Right lobe of liver (tissue), 6 donors: ENCODE measurements at regions of chr10 and their contacts with region 1.

Region 1: GRCh38 chr10:24642622-24643417 is 80.9 kb downstream of the ARHGAP21 start:
- DNase-seq: no peak
- ATAC-seq: peak; percentile 98 to 99 (median 98)
- H3K4me3 ChIP-seq: no peak overlapping the region
- H3K27ac ChIP-seq: no peak overlapping the region
- H3K4me1 ChIP-seq: peaks cover 0 to 15% (median 7%) of the 10 kb centered on the region in 4 donors
- H3K27me3 ChIP-seq: no peaks in the 10 kb centered on the region
- CTCF ChIP-seq: peak; percentile 70 to 93 (median 74)
- POLR2A ChIP-seq: no peak

Region 2: DNA sequence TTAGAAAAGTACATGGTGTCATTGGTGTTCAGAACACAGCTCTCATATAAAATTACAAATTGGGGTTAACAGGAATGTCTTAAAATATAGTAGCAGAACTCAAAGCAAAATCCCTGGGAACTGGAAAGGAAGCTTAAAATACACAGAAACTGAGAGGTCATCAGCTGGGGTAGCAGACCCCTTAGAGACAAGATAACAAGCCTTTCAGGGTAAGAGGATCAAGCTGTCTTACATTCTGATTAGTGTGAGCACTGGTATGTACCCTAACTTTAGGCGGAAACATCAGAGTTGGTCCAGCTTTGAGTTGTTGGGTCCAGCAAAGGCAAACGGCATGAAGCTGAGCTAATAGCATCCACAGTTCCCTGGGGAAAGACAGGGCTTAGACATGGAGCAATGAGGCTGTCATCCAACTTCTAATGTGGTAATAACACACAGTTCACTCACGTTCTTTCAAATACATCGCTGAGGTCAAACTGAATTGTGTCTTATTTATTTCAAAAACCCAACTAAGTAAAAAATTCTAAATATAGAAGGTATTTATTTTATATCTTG is 48.2 kb after region 1 on chr10:
- intact Hi-C with region 1: no loop called
- DNase-seq: no peak
- ATAC-seq: peak; percentile 11 to 49 (median 26)
- H3K4me3 ChIP-seq: no peak overlapping the region
- H3K27ac ChIP-seq: no peak overlapping the region
- H3K4me1 ChIP-seq: no peaks in the 10 kb centered on the region
- H3K27me3 ChIP-seq: no peaks in the 10 kb centered on the region
- CTCF ChIP-seq: no peak
- POLR2A ChIP-seq: no peak

Region 3: DNA sequence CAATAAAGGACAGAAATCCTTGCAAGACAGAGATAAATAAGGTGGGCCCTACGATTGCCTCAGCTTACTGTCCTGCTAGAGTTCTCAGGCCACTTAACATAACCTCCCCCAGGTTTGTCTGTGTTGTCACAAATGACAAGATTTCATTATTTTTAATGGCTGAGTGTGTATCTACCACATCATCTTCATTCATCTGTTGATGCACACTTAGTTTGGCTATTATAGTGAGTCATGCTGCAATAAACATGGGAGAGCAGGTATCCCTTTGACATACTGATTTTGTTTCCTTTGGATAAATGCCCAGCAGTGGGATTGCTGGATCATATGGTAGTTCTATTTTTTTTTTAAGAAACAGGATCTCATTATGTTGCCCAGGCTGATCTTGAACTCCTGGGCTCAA is 249.0 kb after region 1 on chr10:
- intact Hi-C with region 1: no loop called
- DNase-seq: no peak
- ATAC-seq: no peak
- H3K4me3 ChIP-seq: no peak overlapping the region
- H3K27ac ChIP-seq: no peak overlapping the region
- H3K4me1 ChIP-seq: no peaks in the 10 kb centered on the region
- H3K27me3 ChIP-seq: no peaks in the 10 kb centered on the region
- CTCF ChIP-seq: no peak
- POLR2A ChIP-seq: no peak

Region 4: GRCh38 chr10:24989867-24990266 is 347.0 kb after region 1 on chr10:
- intact Hi-C with region 1: loop called in 1 of 2 experiments (anchors 10 kb)
- DNase-seq: no peak
- ATAC-seq: no peak
- H3K4me3 ChIP-seq: no peak overlapping the region
- H3K27ac ChIP-seq: no peak overlapping the region
- H3K4me1 ChIP-seq: peaks cover 0 to 10% (median 0%) of the 10 kb centered on the region in 4 donors
- H3K27me3 ChIP-seq: no peaks in the 10 kb centered on the region
- CTCF ChIP-seq: peak; percentile 11 to 34 (median 18)
- POLR2A ChIP-seq: no peak